Testis (tissue), 5 donors: ENCODE measurements at regions of chr3 and their contacts with region 1.

Region 1: GRCh38 chr3:171566803-171567422 is 106.7 kb upstream of the TNIK start:
- DNase-seq: no peak
- H3K4me3 ChIP-seq: no peak overlapping the region
- H3K27ac ChIP-seq: no peak overlapping the region
- H3K4me1 ChIP-seq: no peaks in the 10 kb centered on the region
- H3K27me3 ChIP-seq: no peaks in the 10 kb centered on the region
- CTCF ChIP-seq: peak; percentile 72 to 86 (median 77)
- POLR2A ChIP-seq: no peak

Region 2: DNA sequence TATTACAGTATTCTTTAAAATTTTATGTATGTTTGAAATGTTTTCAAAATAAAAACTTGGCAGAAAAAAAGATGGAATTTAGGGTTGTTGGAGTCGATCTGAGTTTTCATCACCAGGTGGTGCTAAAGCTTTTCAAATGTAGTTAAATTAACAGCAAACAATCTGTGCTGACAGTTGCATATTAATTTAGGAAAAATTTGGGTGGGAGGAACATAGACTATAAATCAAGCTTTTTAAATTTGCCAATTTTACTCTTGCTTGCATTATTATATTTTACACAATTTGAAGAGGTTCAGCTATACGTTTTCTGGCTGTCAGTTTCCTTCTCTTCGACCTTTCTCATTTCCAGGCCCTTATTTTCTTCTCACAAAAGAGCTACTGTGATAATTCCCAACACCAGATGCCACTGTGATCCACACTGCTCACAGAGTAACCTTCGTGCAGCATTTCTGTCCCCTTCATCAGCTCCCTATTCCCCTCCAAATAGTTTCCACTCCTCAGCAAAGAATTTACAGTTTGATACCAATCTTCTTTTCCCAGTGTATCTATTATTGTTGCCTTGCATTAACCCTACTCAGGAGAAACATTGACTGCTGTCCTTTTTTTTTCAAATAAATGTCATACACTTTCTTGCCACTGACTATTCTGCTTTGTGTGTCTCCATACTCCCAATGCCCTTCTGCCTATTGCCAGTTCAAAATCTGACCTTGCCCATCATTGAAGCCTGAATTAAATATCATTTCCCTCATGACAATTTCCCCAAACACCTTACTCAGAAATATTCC is 605.1 kb before region 1 on chr3:
- intact Hi-C with region 1: loop called (anchors 10 kb)
- DNase-seq: no peak
- H3K4me3 ChIP-seq: no peak overlapping the region
- H3K27ac ChIP-seq: no peak overlapping the region
- H3K4me1 ChIP-seq: no peaks in the 10 kb centered on the region
- H3K27me3 ChIP-seq: no peaks in the 10 kb centered on the region
- CTCF ChIP-seq: peak; percentile 33 to 39 (median 34)
- POLR2A ChIP-seq: no peak

Region 3: GRCh38 chr3:171162986-171163723 is 403.8 kb before region 1 on chr3:
- intact Hi-C with region 1: no loop called
- DNase-seq: no peak
- H3K4me3 ChIP-seq: no peak overlapping the region
- H3K27ac ChIP-seq: no peak overlapping the region
- H3K4me1 ChIP-seq: no peaks in the 10 kb centered on the region
- H3K27me3 ChIP-seq: no peaks in the 10 kb centered on the region
- CTCF ChIP-seq: peak; percentile 53 to 63 (median 59)
- POLR2A ChIP-seq: no peak